MCF 10A (cell line): ENCODE measurements at regions of chr20 and their contacts with region 1.

Region 1: DNA sequence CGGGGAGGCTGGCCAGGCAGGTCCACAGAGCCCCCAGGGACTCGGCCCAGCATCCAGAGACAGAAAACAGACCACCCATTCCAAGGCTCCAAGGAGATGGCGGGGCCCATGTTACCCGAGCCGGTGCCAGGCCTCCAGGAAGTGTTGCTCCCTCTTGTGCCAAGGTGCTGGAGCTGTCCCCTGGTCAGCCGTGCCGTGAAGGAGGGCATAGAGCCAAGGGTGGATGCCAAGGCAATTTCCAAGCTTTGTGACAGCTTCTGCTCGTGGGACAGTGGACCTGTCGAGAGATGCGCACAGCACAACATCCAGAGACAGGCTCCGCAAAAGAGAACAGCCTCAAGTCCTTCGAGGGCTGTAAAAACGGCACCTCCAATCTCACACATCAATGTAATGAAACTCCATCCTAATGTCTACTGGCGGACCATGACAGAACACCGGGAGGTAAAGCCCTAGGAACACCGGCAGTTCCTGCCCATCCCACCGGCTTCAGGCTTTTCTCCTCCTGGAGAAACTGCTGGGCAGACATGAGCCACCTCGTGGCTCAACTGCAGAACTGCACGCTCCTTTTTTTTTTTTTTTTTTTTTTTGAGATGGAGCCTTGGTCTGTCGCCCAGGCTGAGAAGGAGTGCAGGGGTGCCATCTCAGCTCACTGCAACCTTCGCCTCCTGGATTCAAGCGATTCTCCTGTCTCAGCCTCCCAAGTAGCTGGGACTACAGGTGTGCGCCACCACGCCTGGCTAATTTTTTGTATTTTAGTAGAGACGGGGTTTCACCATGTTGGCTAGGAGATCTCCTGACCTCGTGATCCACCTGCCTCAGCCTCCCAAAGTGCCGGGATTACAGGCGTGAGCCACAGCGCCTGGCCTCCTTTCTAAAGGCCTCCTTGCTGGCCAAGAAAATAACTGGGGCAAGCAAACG is 30.9 kb upstream of the AVP start:
- DNase-seq: peak; percentile 52
- H3K4me3 Mint-ChIP-seq: no peak overlapping the region
- H3K27ac Mint-ChIP-seq: no peak overlapping the region
- H3K4me1 Mint-ChIP-seq: peaks cover 8% of the 10 kb centered on the region
- H3K27me3 Mint-ChIP-seq: no peaks in the 10 kb centered on the region
- CTCF ChIP-seq: peak; percentile 47

Region 2: DNA sequence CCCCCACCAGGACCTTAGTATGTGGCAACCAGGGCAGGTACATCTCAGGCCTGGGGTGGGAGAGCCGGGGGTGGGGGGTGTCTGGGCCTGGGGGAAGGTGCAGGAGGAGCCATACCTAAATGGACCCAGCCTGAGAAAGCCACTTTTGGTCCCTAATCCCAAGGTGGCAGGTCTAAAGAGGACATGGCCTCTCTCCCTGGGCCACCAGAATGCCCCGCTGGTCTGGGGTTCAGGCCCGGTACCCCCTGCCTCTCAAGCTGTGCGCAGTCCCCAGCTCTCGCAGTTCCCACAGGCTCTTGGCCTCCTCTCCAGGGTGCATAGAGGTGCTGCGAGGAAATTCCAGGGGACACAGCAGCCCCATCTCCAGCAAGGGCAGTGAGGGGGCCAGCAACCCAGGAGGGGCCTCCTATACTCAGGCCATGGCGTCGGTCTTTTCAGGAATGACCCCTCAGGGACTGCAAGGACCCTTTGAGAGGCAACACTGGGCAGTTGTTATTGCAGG is 29.8 kb before region 1 on chr20:
- CTCF ChIA-PET with region 1: interaction called, 10 read pairs
- POLR2A ChIA-PET with region 1: interaction called, 3 read pairs
- intact Hi-C with region 1: no loop called
- DNase-seq: no peak
- H3K4me3 Mint-ChIP-seq: no peak overlapping the region
- H3K27ac Mint-ChIP-seq: no peak overlapping the region
- H3K4me1 Mint-ChIP-seq: peaks cover 9% of the 10 kb centered on the region
- H3K27me3 Mint-ChIP-seq: peaks cover 31% of the 10 kb centered on the region
- CTCF ChIP-seq: no peak

Region 3: DNA sequence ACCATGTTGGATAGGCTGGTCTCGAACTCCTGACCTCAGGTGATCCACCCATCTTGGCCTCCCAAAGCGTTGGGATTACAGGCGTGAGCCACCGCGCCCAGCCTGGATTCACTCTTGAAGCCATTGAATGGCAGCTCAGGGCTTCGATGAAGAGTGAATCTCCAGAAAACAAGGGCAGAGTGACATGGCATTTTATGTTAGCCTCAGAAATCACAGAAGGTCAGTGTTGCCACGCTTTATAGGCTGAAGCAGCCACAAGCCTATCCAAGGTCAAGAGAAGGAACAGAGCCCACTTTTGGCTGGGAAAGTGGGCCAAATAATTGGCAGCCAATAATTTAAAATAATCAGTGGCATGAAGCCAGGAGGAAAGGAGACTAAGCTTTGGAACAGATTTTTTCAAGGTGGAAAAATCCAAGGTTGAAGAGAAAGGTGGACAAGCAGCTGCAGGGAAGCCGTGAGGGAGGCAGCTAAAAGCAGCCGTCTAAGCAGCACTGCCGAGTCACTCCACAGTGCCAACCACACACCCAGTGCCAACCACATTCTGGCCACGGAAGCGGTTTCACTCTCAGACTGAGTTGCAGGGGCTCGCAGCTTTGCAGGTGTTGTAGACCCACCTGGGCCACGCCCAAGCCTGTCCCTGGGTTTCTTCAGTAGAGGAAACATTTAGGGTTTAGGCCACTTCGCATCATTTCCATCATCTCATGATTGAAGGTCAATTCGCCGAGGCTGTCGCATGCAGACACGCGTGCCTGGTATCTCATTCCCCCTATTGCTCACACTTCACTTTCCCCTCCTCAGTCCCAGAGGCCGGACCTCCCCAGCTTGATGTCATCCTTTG is 13.5 kb before region 1 on chr20:
- CTCF ChIA-PET with region 1: interaction called, 17 read pairs
- POLR2A ChIA-PET with region 1: interaction called, 5 read pairs
- intact Hi-C with region 1: no loop called
- DNase-seq: no peak
- H3K4me3 Mint-ChIP-seq: no peak overlapping the region
- H3K27ac Mint-ChIP-seq: no peak overlapping the region
- H3K4me1 Mint-ChIP-seq: peaks cover 5% of the 10 kb centered on the region
- H3K27me3 Mint-ChIP-seq: no peaks in the 10 kb centered on the region
- CTCF ChIP-seq: no peak

Region 4: GRCh38 chr20:3128275-3128984 is 13.0 kb after region 1 on chr20:
- CTCF ChIA-PET with region 1: interaction called, 18 read pairs
- POLR2A ChIA-PET with region 1: interaction called, 3 read pairs
- intact Hi-C with region 1: no loop called
- DNase-seq: no peak
- H3K4me3 Mint-ChIP-seq: no peak overlapping the region
- H3K27ac Mint-ChIP-seq: no peak overlapping the region
- H3K4me1 Mint-ChIP-seq: peaks cover 4% of the 10 kb centered on the region
- H3K27me3 Mint-ChIP-seq: no peaks in the 10 kb centered on the region
- CTCF ChIP-seq: no peak

Region 5: DNA sequence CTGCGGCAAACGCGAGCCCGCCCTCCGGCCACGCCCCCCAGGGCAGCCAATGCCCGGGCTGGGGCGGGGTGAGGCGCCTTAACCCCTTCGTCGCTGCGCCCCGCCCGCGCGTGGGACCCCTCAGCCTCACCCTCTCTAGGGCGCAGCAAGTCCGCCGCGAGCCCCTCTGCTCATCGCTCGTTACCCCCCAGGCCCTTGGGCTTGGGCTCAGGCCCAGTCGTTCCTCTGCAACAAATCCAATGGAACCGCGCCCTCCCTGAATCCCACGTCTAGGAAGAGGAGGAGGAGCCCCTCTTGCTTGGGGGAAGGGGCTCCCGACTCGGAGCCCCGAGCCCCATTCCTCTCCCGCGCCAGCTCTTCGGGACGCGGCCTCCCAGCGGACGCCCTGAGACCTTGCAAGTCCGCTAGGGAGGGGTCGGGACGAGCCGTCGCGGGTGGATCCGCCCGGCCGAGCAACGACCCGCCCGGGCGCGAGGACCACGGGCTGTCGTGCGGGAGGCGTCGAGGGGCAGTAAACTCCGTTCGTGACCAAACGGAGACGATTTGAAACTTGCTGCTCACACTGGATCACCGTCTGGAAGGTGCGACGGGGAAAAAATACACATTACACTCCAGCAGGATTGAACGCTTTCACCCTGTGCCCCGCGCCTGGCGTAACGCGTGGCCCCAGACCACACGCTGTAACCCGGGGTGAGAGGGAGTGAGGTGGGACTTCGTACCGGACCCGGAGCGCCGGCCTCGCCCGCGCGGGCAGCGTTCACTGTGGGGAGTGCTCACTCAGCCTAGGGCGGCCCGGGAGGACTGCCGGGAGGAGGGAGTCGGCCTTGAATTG is 58.4 kb after region 1 on chr20:
- CTCF ChIA-PET with region 1: interaction called, 4 read pairs
- POLR2A ChIA-PET with region 1: interaction called, 4 read pairs
- intact Hi-C with region 1: loop called (anchors 2 kb)
- DNase-seq: peak; percentile 83
- H3K4me3 Mint-ChIP-seq: peak overlapping the region; percentile 93
- H3K27ac Mint-ChIP-seq: peak overlapping the region; percentile 86
- H3K4me1 Mint-ChIP-seq: peaks cover 14% of the 10 kb centered on the region
- H3K27me3 Mint-ChIP-seq: no peaks in the 10 kb centered on the region
- CTCF ChIP-seq: peak; percentile 16

Region 6: GRCh38 chr20:3340443-3340842 is 225.0 kb after region 1 on chr20:
- CTCF ChIA-PET with region 1: no interaction called
- POLR2A ChIA-PET with region 1: no interaction called
- intact Hi-C with region 1: no loop called
- DNase-seq: no peak
- H3K4me3 Mint-ChIP-seq: no peak overlapping the region
- H3K27ac Mint-ChIP-seq: no peak overlapping the region
- H3K4me1 Mint-ChIP-seq: no peaks in the 10 kb centered on the region
- H3K27me3 Mint-ChIP-seq: no peaks in the 10 kb centered on the region
- CTCF ChIP-seq: no peak